ENCODE measurements at regions of chr7 and their contacts with region 1.

Region 1: GRCh38 chr7:138015096-138015495 is 13.2 kb upstream of the CREB3L2 start:
- DNase-seq: no peak
- H3K4me3 ChIP-seq: no peak overlapping the region
- H3K27ac ChIP-seq: no peak overlapping the region
- H3K4me1 ChIP-seq: no peaks in the 10 kb centered on the region
- H3K27me3 ChIP-seq: no peaks in the 10 kb centered on the region
- CTCF ChIP-seq: no peak
- EP300 ChIP-seq: no peak
- POLR2A ChIP-seq: no peak

Region 2: DNA sequence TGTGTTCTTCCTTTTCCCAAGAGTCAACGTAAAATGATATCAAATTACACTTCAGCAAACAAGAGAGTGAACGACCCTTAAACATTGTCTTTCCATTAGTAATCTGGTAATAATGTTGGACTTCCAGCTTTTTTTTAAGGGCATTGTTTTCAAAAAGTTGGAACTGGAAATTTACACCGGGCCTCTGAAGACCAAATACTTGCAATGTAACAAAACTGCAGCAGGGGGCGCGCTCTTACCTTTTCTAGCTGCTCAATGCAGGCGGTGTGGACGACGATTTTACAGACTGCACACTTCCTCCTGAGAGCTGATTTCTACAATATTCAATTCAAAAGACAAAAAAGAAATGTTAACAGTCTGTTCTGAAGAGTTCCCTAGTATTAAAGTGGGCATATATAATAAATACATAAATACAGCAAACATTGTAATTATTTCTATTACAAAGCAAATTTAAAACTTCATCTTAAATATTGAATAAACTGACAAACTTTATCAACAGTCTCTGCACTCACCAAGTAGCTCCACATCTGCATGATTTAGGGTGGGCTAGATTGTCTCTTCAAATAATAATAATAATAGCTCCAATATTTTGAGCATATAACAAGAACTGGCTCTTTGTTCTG is 358.8 kb before region 1 on chr7:
- intact Hi-C with region 1: loop called in 2 of 4 experiments (anchors 10 kb)
- DNase-seq: peak; percentile 32 to 76 (median 71)
- H3K4me3 ChIP-seq: no peak overlapping the region
- H3K27ac ChIP-seq: no peak overlapping the region
- H3K4me1 ChIP-seq: no peaks in the 10 kb centered on the region
- H3K27me3 ChIP-seq: no peaks in the 10 kb centered on the region
- CTCF ChIP-seq: peak; percentile 36 to 53 (median 48)
- EP300 ChIP-seq: no peak
- POLR2A ChIP-seq: no peak

Region 3: DNA sequence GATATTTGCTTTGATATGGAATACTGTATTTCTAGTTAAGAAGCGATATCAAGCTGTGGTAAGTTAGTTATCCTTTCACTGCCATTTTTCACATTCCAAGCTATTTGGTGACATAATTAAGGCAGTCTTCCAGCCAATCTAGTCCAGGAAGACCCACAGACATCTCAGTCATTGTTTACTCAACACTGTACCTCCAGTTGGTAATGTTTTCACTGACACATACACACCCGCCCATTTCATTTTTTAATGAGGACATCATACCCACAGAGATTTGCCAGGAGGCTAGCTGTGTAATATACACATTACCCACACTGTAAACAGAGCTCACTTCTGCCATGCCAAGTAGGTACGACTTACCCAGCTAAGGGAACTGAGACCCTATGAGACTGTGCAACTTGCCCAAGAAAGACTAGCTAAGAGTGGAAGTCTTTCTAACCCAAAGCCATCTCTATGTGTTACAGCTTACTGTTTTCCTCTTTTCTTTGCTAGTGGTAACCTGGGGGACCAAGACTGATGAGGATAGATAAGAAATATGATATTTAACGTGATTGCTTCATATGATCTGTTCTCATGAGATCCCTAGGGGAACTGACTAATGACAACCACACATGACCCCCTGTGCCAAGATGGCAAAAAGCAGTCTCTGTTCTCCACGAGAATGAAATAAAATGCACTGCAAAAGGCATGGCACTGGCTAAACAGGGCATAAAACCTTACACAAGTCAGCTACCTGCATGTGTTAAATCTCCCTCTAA is 347.3 kb before region 1 on chr7:
- intact Hi-C with region 1: loop called in 1 of 4 experiments (anchors 10 kb)
- DNase-seq: no peak
- H3K4me3 ChIP-seq: no peak overlapping the region
- H3K27ac ChIP-seq: no peak overlapping the region
- H3K4me1 ChIP-seq: no peaks in the 10 kb centered on the region
- H3K27me3 ChIP-seq: no peaks in the 10 kb centered on the region
- CTCF ChIP-seq: no peak
- EP300 ChIP-seq: no peak
- POLR2A ChIP-seq: no peak